ENCODE measurements at regions of chr4 and their contacts with region 1.

Region 1: DNA sequence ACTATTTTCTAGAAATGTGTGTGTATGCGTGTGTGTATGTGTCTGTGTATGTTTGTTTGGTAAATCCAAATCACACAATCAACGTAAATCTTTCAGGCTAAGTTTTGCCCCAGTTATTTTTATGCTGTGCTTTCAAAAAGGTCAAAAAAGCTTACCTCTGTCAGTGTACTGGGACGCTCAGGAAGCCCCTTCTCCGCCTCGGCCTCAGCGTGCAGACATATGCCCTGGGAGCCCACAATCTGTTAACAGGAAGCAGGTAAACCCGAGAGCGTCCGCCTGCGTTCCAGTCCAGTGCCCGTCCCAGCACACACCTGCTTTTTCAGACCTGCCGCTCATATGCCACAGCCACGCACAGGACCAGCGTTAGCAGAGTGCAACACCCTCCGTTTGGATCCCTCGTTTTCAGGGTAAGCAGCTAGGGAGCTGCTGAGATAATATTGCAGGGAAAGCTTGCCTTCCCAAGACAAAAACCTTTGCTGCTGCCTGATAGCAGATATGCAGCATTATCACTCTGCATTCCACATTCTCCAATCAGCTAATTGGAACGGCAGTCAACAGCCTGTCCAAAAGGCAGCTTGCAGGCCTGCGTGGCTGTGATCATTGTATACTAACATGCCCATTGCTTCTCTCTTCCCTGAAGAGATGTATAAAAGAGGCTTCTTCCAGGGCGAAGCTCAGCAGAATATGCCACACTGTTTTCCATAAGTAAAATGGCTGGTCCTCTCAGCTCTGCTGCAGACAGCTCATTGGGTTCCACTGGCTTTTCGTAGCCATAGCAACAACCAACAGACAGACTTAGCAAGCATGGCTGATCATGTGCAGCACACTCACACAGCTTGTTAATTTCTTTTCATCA is at the start of gene SORBS2:
- DNase-seq: peak; percentile 74
- H3K4me3 ChIP-seq: peak within 1 kb of the TSS; percentile 55
- H3K4me3 Mint-ChIP-seq: peak within 1 kb of the TSS; percentile 90
- H3K27ac Mint-ChIP-seq: peak within 1 kb of the TSS; percentile 93
- H3K4me1 ChIP-seq: peaks cover 12% of the 10 kb centered on the region
- H3K4me1 Mint-ChIP-seq: peaks cover 26% of the 10 kb centered on the region
- H3K27me3 ChIP-seq: no peaks in the 10 kb centered on the region
- H3K27me3 Mint-ChIP-seq: no peaks in the 10 kb centered on the region
- CTCF ChIP-seq: no peak
- total RNA-seq, gene SORBS2: 47.7 and 59.7 TPM in 2 replicates

Region 2: GRCh38 chr4:185651137-185651677 is 160.5 kb before region 1 on chr4:
- CTCF ChIA-PET with region 1: no interaction called
- POLR2A ChIA-PET with region 1: no interaction called
- intact Hi-C with region 1: loop called (anchors 2 kb)
- DNase-seq: peak in 1 of 2 experiments; percentile 49
- H3K4me3 ChIP-seq: no peak overlapping the region
- H3K4me3 Mint-ChIP-seq: peak overlapping the region; percentile 18
- H3K27ac Mint-ChIP-seq: peak overlapping the region; percentile 74
- H3K4me1 ChIP-seq: peaks cover 18% of the 10 kb centered on the region
- H3K4me1 Mint-ChIP-seq: peaks cover 18% of the 10 kb centered on the region
- H3K27me3 ChIP-seq: no peaks in the 10 kb centered on the region
- H3K27me3 Mint-ChIP-seq: no peaks in the 10 kb centered on the region
- CTCF ChIP-seq: no peak

Region 3: DNA sequence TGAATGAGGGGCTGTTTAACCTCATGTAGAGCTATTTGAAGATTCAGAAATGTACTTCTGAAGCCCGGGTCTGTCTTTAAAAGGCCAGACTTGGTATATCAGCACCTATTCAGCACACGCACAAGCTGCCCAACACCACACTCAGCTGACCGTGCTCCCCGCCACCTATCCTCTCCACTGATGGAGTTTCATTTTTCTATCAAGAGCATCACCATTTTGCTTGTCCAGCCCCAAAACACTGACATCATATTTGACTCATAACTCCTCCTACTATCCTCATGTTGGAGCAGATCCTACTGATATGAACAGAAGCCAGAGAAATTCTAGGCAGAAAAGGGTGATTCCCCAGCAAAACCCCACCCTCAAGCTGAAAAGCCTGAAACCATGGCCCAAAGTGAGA is 100.0 kb before region 1 on chr4:
- CTCF ChIA-PET with region 1: no interaction called
- POLR2A ChIA-PET with region 1: no interaction called
- intact Hi-C with region 1: loop called (anchors 2 kb)
- DNase-seq: no peak
- H3K4me3 ChIP-seq: no peak overlapping the region
- H3K4me3 Mint-ChIP-seq: peak overlapping the region; percentile 44
- H3K27ac Mint-ChIP-seq: peak overlapping the region; percentile 96
- H3K4me1 ChIP-seq: peaks cover 37% of the 10 kb centered on the region
- H3K4me1 Mint-ChIP-seq: peaks cover 35% of the 10 kb centered on the region
- H3K27me3 ChIP-seq: no peaks in the 10 kb centered on the region
- H3K27me3 Mint-ChIP-seq: no peaks in the 10 kb centered on the region
- CTCF ChIP-seq: no peak

Region 4: GRCh38 chr4:185831125-185831815 is 19.5 kb after region 1 on chr4:
- CTCF ChIA-PET with region 1: interaction called, 5 read pairs
- POLR2A ChIA-PET with region 1: interaction called, 13 read pairs
- intact Hi-C with region 1: loop called (anchors 1 kb)
- DNase-seq: peak; percentile 28 to 66
- H3K4me3 ChIP-seq: no peak overlapping the region
- H3K4me3 Mint-ChIP-seq: peak overlapping the region; percentile 36
- H3K27ac Mint-ChIP-seq: peak overlapping the region; percentile 65
- H3K4me1 ChIP-seq: peaks cover 56% of the 10 kb centered on the region
- H3K4me1 Mint-ChIP-seq: peaks cover 32% of the 10 kb centered on the region
- H3K27me3 ChIP-seq: no peaks in the 10 kb centered on the region
- H3K27me3 Mint-ChIP-seq: no peaks in the 10 kb centered on the region
- CTCF ChIP-seq: no peak

Region 5: GRCh38 chr4:186021461-186022167 is 209.9 kb after region 1 on chr4:
- CTCF ChIA-PET with region 1: interaction called, 3 read pairs
- POLR2A ChIA-PET with region 1: no interaction called
- intact Hi-C with region 1: loop called (anchors 1 kb)
- DNase-seq: peak in 1 of 2 experiments; percentile 23
- H3K4me3 ChIP-seq: no peak overlapping the region
- H3K4me3 Mint-ChIP-seq: no peak overlapping the region
- H3K27ac Mint-ChIP-seq: no peak overlapping the region
- H3K4me1 ChIP-seq: no peaks in the 10 kb centered on the region
- H3K4me1 Mint-ChIP-seq: peaks cover 6% of the 10 kb centered on the region
- H3K27me3 ChIP-seq: no peaks in the 10 kb centered on the region
- H3K27me3 Mint-ChIP-seq: no peaks in the 10 kb centered on the region
- CTCF ChIP-seq: peak; percentile 74 to 75

Measured in Caco-2 (cell line).